Panc1 (cell line): ENCODE measurements at regions of chr6 and their contacts with region 1.

Region 1: GRCh38 chr6:157769776-157770421 is 53.1 kb upstream of the SNX9 start:
- DNase-seq: no peak
- ATAC-seq: peak; percentile 65
- H3K4me3 ChIP-seq: peak overlapping the region in 1 of 2 experiments; percentile 8; a peak in 1 of 4 replicates
- H3K27ac ChIP-seq: peak overlapping the region; percentile 85
- H3K4me1 ChIP-seq: peaks cover 37% of the 10 kb centered on the region
- H3K27me3 ChIP-seq: no peaks in the 10 kb centered on the region
- CTCF ChIP-seq: no peak

Region 2: GRCh38 chr6:156686995-156687788 is 1082.7 kb before region 1 on chr6:
- CTCF ChIA-PET with region 1: no interaction called
- POLR2A ChIA-PET with region 1: interaction called, 11 read pairs
- in situ Hi-C with region 1: no loop called
- intact Hi-C with region 1: no loop called
- DNase-seq: no peak
- ATAC-seq: peak; percentile 93
- H3K4me3 ChIP-seq: peak overlapping the region; percentile 63 to 87
- H3K27ac ChIP-seq: peak overlapping the region; percentile 98
- H3K4me1 ChIP-seq: peaks cover 18% of the 10 kb centered on the region
- H3K27me3 ChIP-seq: no peaks in the 10 kb centered on the region; the same call in 1 of the 2 replicates
- CTCF ChIP-seq: no peak

Region 3: DNA sequence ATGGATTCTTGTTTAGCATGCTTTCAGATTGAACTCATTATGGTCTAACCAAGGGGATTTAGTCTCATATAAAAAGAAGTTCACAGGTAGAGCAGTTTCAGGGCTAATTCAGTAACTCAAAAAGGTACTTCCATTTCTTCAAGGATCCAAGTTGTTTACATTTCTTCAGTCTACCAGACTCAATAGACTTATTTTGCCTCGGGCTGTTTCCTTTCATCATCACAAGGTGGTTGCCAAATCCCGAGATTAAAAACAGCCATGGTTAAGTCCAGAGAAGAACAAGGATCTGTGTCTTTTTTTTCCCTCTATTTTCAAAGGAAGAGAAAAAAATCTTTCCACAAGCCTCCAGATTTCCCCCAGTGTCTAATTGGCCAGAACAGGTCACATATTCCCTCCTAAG is 16.6 kb before region 1 on chr6:
- CTCF ChIA-PET with region 1: no interaction called
- POLR2A ChIA-PET with region 1: no interaction called
- in situ Hi-C with region 1: no loop called
- intact Hi-C with region 1: no loop called
- DNase-seq: no peak
- ATAC-seq: no peak
- H3K4me3 ChIP-seq: no peak overlapping the region
- H3K27ac ChIP-seq: no peak overlapping the region
- H3K4me1 ChIP-seq: peaks cover 19% of the 10 kb centered on the region
- H3K27me3 ChIP-seq: no peaks in the 10 kb centered on the region
- CTCF ChIP-seq: no peak